ENCODE measurements at regions of chr1 and their contacts with region 1.

Region 1: DNA sequence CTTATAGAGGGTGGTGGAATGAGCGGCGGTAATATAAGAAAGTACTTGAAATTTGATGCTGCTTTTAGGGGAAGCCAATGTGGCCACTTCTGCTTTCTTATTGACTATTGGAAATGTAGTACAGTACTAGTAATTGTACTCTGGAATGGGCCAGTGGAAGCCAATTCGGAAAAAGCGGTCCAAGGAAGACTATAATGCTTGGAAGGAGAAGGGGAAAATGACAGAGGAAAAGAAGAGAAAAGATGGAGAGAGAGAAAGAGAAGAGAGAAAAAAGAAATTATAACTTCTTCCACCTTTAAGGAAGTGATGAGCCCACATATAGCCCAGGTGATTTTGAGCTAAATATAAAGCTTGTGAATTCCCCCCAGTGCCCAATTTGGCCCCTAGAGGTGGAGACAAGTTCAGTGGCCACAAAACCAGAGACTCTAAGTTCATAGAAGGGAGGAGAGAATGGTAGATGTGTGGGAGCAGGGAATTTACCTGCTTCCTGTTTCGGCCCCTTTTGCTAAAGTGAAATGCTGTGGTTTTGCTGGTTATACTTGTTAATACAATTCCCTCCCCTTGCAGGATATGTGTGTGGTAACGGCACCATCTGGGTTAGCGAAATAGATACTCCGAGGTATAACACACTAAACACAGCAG is 35.7 kb upstream of the DUSP10 start:
- DNase-seq: peak; percentile 62
- ATAC-seq: peak; percentile 76
- H3K4me3 Mint-ChIP-seq: peak overlapping the region; percentile 11
- H3K27ac Mint-ChIP-seq: peak overlapping the region; percentile 87
- H3K4me1 Mint-ChIP-seq: peaks cover 63% of the 10 kb centered on the region
- H3K27me3 Mint-ChIP-seq: no peaks in the 10 kb centered on the region

Region 2: DNA sequence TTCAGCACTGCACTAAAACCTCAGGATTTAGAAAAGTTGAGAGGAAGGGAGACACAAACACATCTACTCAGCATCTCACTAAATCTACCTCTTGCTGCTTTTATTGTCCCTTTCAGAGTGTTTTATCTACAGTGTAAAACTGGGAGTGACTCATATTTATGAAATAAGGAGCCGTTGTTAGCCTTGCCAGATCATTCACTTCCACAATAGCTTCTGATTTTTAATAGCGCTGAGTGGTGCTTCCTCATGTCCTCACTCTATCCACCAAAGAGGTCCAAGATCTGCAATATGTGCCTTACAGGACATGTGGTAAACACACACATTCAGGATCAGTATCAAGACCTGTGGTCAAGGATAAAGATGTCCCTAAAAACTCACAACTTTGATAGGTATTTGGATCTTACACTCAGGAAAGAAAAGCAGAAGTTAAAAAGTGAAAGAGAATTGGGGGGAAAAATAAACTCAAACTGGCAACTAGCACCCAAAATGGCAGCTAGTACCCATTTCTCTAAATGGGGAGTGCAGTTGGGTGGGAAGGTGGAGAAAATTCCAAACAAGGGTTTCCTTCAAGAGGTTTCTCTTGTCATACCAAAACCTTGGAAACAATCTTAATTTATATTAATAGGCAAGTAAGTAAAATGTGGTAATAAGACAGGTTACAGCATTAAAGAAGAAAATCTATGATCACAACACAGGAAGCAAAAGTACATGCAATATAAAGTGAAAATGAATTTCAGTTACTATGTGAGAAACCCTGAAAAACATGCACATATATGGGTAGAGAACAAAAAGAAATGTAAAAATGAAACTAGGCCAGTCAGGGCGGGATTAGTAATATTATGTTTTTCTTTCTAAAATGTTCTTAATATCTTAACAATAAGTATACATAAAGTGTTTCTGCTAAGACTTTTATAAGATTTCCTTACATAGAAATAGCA is 51.5 kb before region 1 on chr1:
- CTCF ChIA-PET with region 1: no interaction called
- POLR2A ChIA-PET with region 1: no interaction called
- intact Hi-C with region 1: loop called in 1 of 2 experiments (anchors 1 kb)
- DNase-seq: no peak
- ATAC-seq: peak; percentile 86
- H3K4me3 Mint-ChIP-seq: peak overlapping the region; percentile 39
- H3K27ac Mint-ChIP-seq: peak overlapping the region; percentile 94
- H3K4me1 Mint-ChIP-seq: peaks cover 78% of the 10 kb centered on the region
- H3K27me3 Mint-ChIP-seq: no peaks in the 10 kb centered on the region

Region 3: GRCh38 chr1:221794079-221794670 is 16.6 kb after region 1 on chr1:
- CTCF ChIA-PET with region 1: no interaction called
- POLR2A ChIA-PET with region 1: interaction called, 4 read pairs
- intact Hi-C with region 1: loop called (anchors 1 kb)
- DNase-seq: peak; percentile 54
- ATAC-seq: peak; percentile 91
- H3K4me3 Mint-ChIP-seq: no peak overlapping the region
- H3K27ac Mint-ChIP-seq: peak overlapping the region; percentile 89
- H3K4me1 Mint-ChIP-seq: peaks cover 34% of the 10 kb centered on the region
- H3K27me3 Mint-ChIP-seq: no peaks in the 10 kb centered on the region

Region 4: DNA sequence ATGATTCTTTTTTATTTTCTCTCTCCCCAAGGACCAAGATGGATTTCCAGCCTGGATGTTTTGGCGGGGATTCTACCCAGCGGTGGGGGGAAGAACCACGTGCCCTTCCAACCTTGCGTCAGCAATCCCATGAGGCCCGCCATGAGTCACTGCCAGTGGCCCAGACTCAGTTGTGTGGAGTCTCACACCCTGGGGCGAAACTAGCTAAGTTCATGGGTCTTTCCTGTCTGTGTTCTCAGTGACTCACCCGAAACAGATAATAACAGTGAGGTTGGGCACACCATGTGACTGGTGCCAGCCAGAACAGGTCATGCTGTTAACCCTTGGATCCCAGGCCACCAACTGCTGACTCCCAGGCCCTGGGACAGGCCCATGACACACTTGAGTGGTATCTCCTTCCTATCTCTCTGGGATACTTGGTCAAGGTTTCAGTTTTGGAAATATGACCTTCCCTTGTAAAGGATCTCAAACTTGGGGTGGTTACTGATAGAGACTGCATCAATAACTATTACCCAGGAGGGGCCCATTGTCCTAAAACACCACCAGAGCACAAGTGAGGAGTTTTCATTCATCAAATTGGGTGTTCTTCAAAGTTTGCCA is 62.3 kb after region 1 on chr1:
- CTCF ChIA-PET with region 1: interaction called, 3 read pairs
- POLR2A ChIA-PET with region 1: no interaction called
- intact Hi-C with region 1: loop called (anchors 1 to 2 kb)
- DNase-seq: peak; percentile 85
- ATAC-seq: peak; percentile 98
- H3K4me3 Mint-ChIP-seq: no peak overlapping the region
- H3K27ac Mint-ChIP-seq: peak overlapping the region; percentile 85
- H3K4me1 Mint-ChIP-seq: peaks cover 38% of the 10 kb centered on the region
- H3K27me3 Mint-ChIP-seq: peaks cover 6% of the 10 kb centered on the region

Region 5: GRCh38 chr1:221961532-221962292 is 184.2 kb after region 1 on chr1:
- CTCF ChIA-PET with region 1: no interaction called
- POLR2A ChIA-PET with region 1: no interaction called
- intact Hi-C with region 1: no loop called
- DNase-seq: peak; percentile 72
- ATAC-seq: peak; percentile 97
- H3K4me3 Mint-ChIP-seq: no peak overlapping the region
- H3K27ac Mint-ChIP-seq: peak overlapping the region; percentile 6
- H3K4me1 Mint-ChIP-seq: peaks cover 11% of the 10 kb centered on the region
- H3K27me3 Mint-ChIP-seq: no peaks in the 10 kb centered on the region

Measured in activated CD4-positive, alpha-beta T cell treated with anti-CD3 and anti-CD28 coated beads for 36 hours (primary cell).